ENCODE measurements at regions of chr10 and their contacts with region 1.

Region 1: GRCh38 chr10:60901561-60902235 is 42.3 kb downstream of the RHOBTB1 start:
- DNase-seq: peak; percentile 86 to 90
- ATAC-seq: peak; percentile 95 to 96
- H3K4me3 ChIP-seq: no peak overlapping the region
- H3K27ac ChIP-seq: peak overlapping the region; percentile 82 to 96 (median 88)
- H3K4me1 ChIP-seq: peaks cover 46 to 70% of the 10 kb centered on the region in 2 donors
- H3K27me3 ChIP-seq: no peaks in the 10 kb centered on the region
- CTCF ChIP-seq: no peak
- POLR2A ChIP-seq: no peak

Region 2: GRCh38 chr10:62063795-62064472 is 1162.2 kb after region 1 on chr10:
- in situ Hi-C with region 1: loop called in 1 of 4 experiments (anchors 25 kb)
- intact Hi-C with region 1: loop called (anchors 10 kb)
- DNase-seq: peak; percentile 84 to 87
- ATAC-seq: peak; percentile 91 to 94
- H3K4me3 ChIP-seq: peak overlapping the region in 3 of 4 donors; percentile 20 to 37 (median 30)
- H3K27ac ChIP-seq: peak overlapping the region; percentile 95 to 99 (median 96)
- H3K4me1 ChIP-seq: peaks cover 72 to 97% of the 10 kb centered on the region in 2 donors
- H3K27me3 ChIP-seq: no peaks in the 10 kb centered on the region
- CTCF ChIP-seq: no peak
- POLR2A ChIP-seq: peak in 1 of 2 donors; percentile 50

Measured in gastrocnemius medialis (tissue), 4 donors.